Heart left ventricle (tissue), 16 donors: ENCODE measurements at regions of chr9 and their contacts with region 1.

Region 1: DNA sequence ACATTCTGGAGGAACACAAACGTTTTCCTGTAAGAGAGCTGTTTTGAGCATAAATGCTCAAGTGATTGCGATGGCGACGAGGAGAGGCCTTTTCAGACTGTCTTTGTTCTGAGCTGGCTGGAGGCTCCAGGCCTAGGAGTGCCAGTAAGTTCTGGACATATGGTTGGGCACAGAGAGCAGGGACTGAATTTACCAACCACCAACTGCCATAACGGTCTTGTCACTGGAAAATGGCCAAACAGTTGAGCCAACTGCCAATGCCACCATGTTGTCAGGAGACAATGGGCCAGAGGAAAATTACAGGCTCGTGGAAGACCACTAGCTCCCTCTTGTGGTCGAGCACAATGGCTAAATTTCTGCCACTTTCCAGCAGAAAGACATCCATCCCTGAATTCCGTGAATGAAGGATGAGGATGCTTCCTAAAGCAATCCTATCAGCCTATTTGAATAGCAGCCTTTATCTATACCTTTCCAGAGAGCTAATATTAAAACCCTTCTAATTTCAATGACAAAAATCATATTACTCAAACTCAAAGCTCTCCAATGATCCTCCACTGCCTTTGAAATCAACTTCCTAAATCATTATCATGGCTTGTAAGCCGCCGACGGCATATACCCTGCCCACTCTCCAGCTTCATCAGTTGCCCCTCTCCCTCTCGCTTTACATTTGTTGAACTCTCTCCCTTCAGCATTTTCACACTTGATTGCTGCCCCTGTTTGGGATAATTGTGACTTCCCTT is 66.9 kb upstream of the GLIS3 start:
- DNase-seq: peak in 1 of 5 donors; percentile 7
- ATAC-seq: peak in 1 of 4 donors; percentile 9
- H3K4me3 ChIP-seq: no peak overlapping the region
- H3K27ac ChIP-seq: no peak overlapping the region
- H3K4me1 ChIP-seq: no peaks in the 10 kb centered on the region
- H3K27me3 ChIP-seq: no peaks in the 10 kb centered on the region
- CTCF ChIP-seq: peak; percentile 37 to 63 (median 54)
- POLR2A ChIP-seq: no peak

Region 2: GRCh38 chr9:4324513-4324912 is 42.2 kb before region 1 on chr9:
- intact Hi-C with region 1: loop called in 6 of 10 experiments (anchors 5 to 10 kb)
- DNase-seq: no peak
- ATAC-seq: no peak
- H3K4me3 ChIP-seq: no peak overlapping the region
- H3K27ac ChIP-seq: peak overlapping the region in 1 of 12 donors; percentile 35
- H3K4me1 ChIP-seq: peaks cover 0 to 4% (median 0%) of the 10 kb centered on the region in 12 donors
- H3K27me3 ChIP-seq: no peaks in the 10 kb centered on the region
- CTCF ChIP-seq: no peak
- POLR2A ChIP-seq: no peak